ENCODE measurements at regions of chr9 and their contacts with region 1.

Region 1: GRCh38 chr9:112465352-112465751 is 21.3 kb upstream of the KIAA1958 start:
- DNase-seq: no peak
- ATAC-seq: no peak
- H3K4me3 ChIP-seq: no peak overlapping the region
- H3K27ac ChIP-seq: no peak overlapping the region
- H3K4me1 ChIP-seq: no peaks in the 10 kb centered on the region
- H3K27me3 ChIP-seq: no peaks in the 10 kb centered on the region
- CTCF ChIP-seq: no peak
- POLR2A ChIP-seq: no peak

Region 2: DNA sequence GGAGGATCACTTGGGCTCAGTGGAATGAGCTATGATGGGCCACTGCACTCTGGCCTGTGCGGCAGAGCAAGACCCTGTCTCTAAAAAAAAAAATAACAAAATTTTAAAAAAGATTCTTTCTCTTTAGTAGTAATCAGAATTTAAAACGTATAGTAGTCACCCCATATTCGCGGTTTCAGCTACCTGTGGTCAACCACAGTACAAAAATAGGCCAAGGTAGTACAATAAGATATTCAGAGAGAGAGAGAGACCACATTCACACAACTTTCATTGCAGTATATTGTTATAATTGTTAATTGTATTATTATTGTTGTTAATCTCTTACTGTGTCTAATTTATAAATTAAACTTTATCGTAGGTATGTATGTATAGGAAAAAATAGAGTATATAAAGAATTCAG is 233.9 kb after region 1 on chr9:
- intact Hi-C with region 1: loop called in 2 of 10 experiments (anchors 10 kb)
- DNase-seq: no peak
- ATAC-seq: no peak
- H3K4me3 ChIP-seq: no peak overlapping the region
- H3K27ac ChIP-seq: no peak overlapping the region
- H3K4me1 ChIP-seq: no peaks in the 10 kb centered on the region
- H3K27me3 ChIP-seq: no peaks in the 10 kb centered on the region
- CTCF ChIP-seq: no peak
- POLR2A ChIP-seq: no peak

Region 3: DNA sequence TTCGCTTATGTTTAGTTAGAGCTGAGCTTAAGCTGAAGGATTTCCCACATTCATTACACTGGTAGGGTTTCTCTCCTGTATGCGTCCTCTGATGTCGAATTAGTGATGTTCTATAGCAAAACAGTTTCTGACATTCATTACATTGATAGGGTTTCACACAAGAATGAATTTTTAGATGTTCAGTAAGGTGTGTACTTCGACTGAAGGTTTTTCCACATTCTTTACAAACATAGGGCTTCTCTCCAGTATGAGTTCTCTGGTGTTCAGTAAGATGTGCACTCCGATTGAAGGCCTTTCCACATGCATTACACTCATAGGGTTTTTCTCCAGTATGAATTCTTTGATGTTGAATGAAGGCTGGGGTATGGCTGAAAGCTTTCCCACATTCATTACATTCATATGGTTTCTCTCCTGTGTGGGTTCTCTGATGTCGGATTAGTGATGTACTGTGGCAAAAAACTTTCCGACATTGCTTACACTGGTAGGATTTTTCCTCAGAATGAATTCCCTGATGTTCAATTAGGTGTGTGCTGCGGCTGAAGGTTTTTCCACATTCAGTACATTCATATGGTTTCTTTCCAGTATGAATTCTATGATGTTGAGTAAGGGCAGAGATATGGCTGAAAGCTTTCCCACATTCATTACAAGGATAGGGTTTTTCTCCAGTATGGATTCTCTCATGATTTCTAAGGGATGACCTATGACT is 532.0 kb after region 1 on chr9:
- intact Hi-C with region 1: no loop called
- DNase-seq: no peak
- ATAC-seq: no peak
- H3K4me3 ChIP-seq: no peak overlapping the region
- H3K27ac ChIP-seq: no peak overlapping the region
- H3K4me1 ChIP-seq: no peaks in the 10 kb centered on the region
- H3K27me3 ChIP-seq: no peaks in the 10 kb centered on the region
- CTCF ChIP-seq: no peak
- POLR2A ChIP-seq: no peak

Measured in heart left ventricle (tissue), 16 donors.